K562 (cell line): ENCODE measurements at regions of chr16 and their contacts with region 1.

Region 1: GRCh38 chr16:46555951-46556350 is 65.2 kb downstream of the SHCBP1 start:
- DNase-seq: no peak
- ATAC-seq: no peak
- H3K4me3 ChIP-seq: no peak overlapping the region
- H3K27ac ChIP-seq: no peak overlapping the region
- H3K4me1 ChIP-seq: peaks cover 0 to 2% of the 10 kb centered on the region in 2 experiments; a peak in 2 of 5 replicates
- H3K27me3 ChIP-seq: no peaks in the 10 kb centered on the region
- CTCF ChIP-seq: no peak
- EP300 ChIP-seq: no peak
- POLR2A ChIP-seq: no peak
- RAD21 ChIP-seq: no peak

Region 2: DNA sequence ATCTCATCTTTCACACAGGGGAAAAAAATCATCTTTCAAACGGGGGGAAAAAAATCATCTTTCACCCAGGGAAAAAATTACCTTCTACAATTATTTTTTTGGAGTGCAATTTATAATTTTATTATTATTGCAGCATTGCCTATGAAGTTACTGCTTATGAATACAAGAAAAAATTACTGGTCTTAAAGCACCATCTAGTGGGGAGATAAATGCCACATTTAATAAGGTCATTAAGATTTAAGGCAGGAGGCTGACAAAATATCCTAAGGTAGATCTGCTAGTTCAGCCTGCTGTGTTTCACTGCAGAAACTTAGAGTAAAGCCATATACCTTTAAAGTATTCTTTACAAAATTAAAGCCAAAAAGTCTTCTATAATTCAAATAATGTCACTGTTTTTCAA is 51.6 kb after region 1 on chr16:
- CTCF ChIA-PET with region 1: interaction called, 7 read pairs
- POLR2A ChIA-PET with region 1: interaction called, 3 read pairs
- in situ Hi-C with region 1: no loop called
- intact Hi-C with region 1: loop called (anchors 5 kb)
- DNase-seq: peak; percentile 17 to 35 (median 29)
- ATAC-seq: peak; percentile 56
- H3K4me3 ChIP-seq: no peak overlapping the region
- H3K27ac ChIP-seq: no peak overlapping the region
- H3K4me1 ChIP-seq: no peaks in the 10 kb centered on the region
- H3K27me3 ChIP-seq: no peaks in the 10 kb centered on the region
- CTCF ChIP-seq: peak in 1 of 3 experiments; percentile 50; a peak in 2 of 6 replicates
- EP300 ChIP-seq: no peak
- POLR2A ChIP-seq: no peak
- RAD21 ChIP-seq: peak; percentile 55 to 59; a peak in 3 of 4 replicates

Region 3: GRCh38 chr16:46621006-46621933 is 65.3 kb after region 1 on chr16 and contains the start of gene SHCBP1:
- CTCF ChIA-PET with region 1: no interaction called
- POLR2A ChIA-PET with region 1: no interaction called
- in situ Hi-C with region 1: no loop called
- intact Hi-C with region 1: loop called (anchors 2 kb)
- DNase-seq: peak; percentile 69 to 96 (median 84)
- ATAC-seq: peak; percentile 96
- H3K4me3 ChIP-seq: peak within 1 kb of the TSS; percentile 61
- H3K27ac ChIP-seq: peak within 1 kb of the TSS; percentile 76
- H3K4me1 ChIP-seq: peaks cover 3 to 6% of the 10 kb centered on the region in 2 experiments; a peak in 3 of 5 replicates
- H3K27me3 ChIP-seq: no peaks in the 10 kb centered on the region
- CTCF ChIP-seq: no peak
- EP300 ChIP-seq: no peak; the same call in 1 of the 2 replicates
- POLR2A ChIP-seq: peak; percentile 93
- RAD21 ChIP-seq: no peak
- polyA plus RNA-seq, gene SHCBP1: 6.2 to 6.8 TPM

Region 4: GRCh38 chr16:46853713-46854443 is 297.9 kb after region 1 on chr16:
- CTCF ChIA-PET with region 1: no interaction called
- POLR2A ChIA-PET with region 1: no interaction called
- in situ Hi-C with region 1: no loop called
- intact Hi-C with region 1: no loop called
- DNase-seq: peak; percentile 60 to 77 (median 68)
- ATAC-seq: peak; percentile 92
- H3K4me3 ChIP-seq: no peak overlapping the region
- H3K27ac ChIP-seq: no peak overlapping the region
- H3K4me1 ChIP-seq: peaks cover 0 to 6% of the 10 kb centered on the region in 2 experiments; a peak in 1 of 5 replicates
- H3K27me3 ChIP-seq: peaks cover 0 to 10% of the 10 kb centered on the region in 2 experiments; a peak in 3 of 5 replicates
- CTCF ChIP-seq: peak; percentile 89 to 94 (median 91)
- EP300 ChIP-seq: no peak
- POLR2A ChIP-seq: no peak
- RAD21 ChIP-seq: peak; percentile 86 to 94